CD4-positive, alpha-beta T cell (primary cell): ENCODE measurements at regions of chr11 and their contacts with region 1.

Region 1: DNA sequence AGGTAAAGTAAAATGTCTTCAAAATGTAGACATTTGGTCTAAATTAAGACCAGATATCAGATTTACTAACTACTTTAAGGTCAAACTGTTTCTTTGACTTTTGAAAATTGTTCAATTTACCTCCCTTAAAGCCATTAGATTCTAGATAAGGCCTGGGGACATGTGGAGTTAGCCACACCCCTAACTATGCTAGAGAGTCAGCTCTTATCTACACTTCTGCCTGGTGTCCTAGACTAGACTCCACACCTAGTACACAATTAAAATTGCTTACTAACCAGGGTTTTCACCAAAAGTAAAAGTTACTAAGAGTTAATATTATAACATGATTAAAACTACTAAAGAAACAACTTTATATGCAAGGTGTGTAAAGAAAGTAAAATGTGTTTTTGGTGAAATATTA is 43.6 kb upstream of the DBX1 start:
- DNase-seq: no peak
- ATAC-seq: no peak
- H3K4me3 ChIP-seq: no peak overlapping the region
- H3K4me3 Mint-ChIP-seq: no peak overlapping the region
- H3K27ac ChIP-seq: no peak overlapping the region
- H3K27ac Mint-ChIP-seq: no peak overlapping the region
- H3K4me1 ChIP-seq: no peaks in the 10 kb centered on the region
- H3K4me1 Mint-ChIP-seq: no peaks in the 10 kb centered on the region
- H3K27me3 ChIP-seq: peaks cover 28 to 47% of the 10 kb centered on the region in 2 experiments
- H3K27me3 Mint-ChIP-seq: peaks cover 70% of the 10 kb centered on the region
- CTCF ChIP-seq: no peak

Region 2: DNA sequence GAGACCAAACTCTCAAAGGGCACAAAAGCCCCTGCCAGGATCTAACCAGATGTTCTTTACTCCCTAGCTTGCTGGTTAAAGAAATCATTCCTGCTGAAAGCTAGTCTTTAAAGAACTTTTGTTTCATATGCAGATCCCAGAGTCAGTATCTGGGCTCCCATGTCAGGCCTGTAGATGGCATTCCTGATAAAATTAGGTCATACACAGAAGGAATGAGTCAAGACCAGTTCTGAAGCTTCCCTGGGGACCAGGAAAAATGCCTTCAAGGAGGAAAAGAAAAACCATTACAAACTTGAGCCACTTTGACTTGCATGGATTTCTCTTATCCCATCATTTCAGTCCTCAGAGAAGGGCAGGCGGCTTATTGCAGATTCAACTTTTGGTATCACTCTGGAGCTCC is 49.5 kb before region 1 on chr11:
- CTCF ChIA-PET with region 1: no interaction called
- POLR2A ChIA-PET with region 1: no interaction called
- intact Hi-C with region 1: loop called in 1 of 2 experiments (anchors 2 kb)
- DNase-seq: no peak
- ATAC-seq: no peak
- H3K4me3 ChIP-seq: no peak overlapping the region
- H3K4me3 Mint-ChIP-seq: no peak overlapping the region
- H3K27ac ChIP-seq: no peak overlapping the region
- H3K27ac Mint-ChIP-seq: no peak overlapping the region
- H3K4me1 ChIP-seq: peaks cover 30% of the 10 kb centered on the region
- H3K4me1 Mint-ChIP-seq: peaks cover 32% of the 10 kb centered on the region
- H3K27me3 ChIP-seq: peaks cover 32 to 34% of the 10 kb centered on the region in 2 experiments
- H3K27me3 Mint-ChIP-seq: peaks cover 47% of the 10 kb centered on the region
- CTCF ChIP-seq: no peak